Vagina (tissue), 2 donors: ENCODE measurements at regions of chr10 and their contacts with region 1.

Region 1: GRCh38 chr10:3248888-3249758 is 76.5 kb upstream of the PITRM1 start:
- DNase-seq: no peak
- H3K4me3 ChIP-seq: no peak overlapping the region
- H3K27ac ChIP-seq: peak overlapping the region; percentile 75
- H3K4me1 ChIP-seq: peaks cover 13% of the 10 kb centered on the region
- H3K27me3 ChIP-seq: no peaks in the 10 kb centered on the region
- CTCF ChIP-seq: no peak
- POLR2A ChIP-seq: no peak

Region 2: GRCh38 chr10:3452173-3452626 is 203.1 kb after region 1 on chr10:
- intact Hi-C with region 1: loop called (anchors 10 kb)
- DNase-seq: no peak
- H3K4me3 ChIP-seq: no peak overlapping the region
- H3K27ac ChIP-seq: peak overlapping the region; percentile 80
- H3K4me1 ChIP-seq: peaks cover 19% of the 10 kb centered on the region
- H3K27me3 ChIP-seq: no peaks in the 10 kb centered on the region
- CTCF ChIP-seq: peak in 1 of 3 experiments; percentile 40
- POLR2A ChIP-seq: no peak

Region 3: DNA sequence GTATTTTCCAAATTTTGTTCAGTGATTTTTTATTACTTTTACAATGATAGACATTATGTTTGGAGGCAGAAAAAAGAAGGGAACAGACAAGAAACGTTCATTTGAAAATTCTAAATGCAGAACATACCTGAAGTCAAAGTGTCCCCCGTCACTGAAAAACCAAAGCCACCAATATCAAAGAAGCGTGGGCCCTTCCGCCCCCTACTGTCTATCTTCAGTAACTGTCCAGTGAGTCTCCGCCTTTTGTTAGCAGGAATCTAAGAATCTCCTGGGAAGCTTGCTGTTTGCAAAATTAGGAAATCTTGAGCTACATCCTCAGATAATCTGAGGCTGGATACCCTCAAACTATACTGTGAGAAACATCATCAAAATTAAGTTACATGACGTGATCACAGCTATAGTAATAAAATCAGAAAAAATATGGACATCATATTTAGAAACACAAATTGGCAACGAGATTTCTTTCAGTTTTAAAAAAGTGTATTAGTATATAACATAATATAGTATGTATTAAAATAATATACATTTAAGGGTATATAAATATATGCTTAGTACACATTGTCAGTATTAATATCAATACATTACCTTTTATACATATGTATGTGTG is 1407.6 kb after region 1 on chr10:
- intact Hi-C with region 1: loop called (anchors 10 kb)
- DNase-seq: no peak
- H3K4me3 ChIP-seq: no peak overlapping the region
- H3K27ac ChIP-seq: no peak overlapping the region
- H3K4me1 ChIP-seq: peaks cover 37% of the 10 kb centered on the region
- H3K27me3 ChIP-seq: no peaks in the 10 kb centered on the region
- CTCF ChIP-seq: peak; percentile 63 to 89 (median 88)
- POLR2A ChIP-seq: no peak